ENCODE measurements at regions of chr7 and their contacts with region 1.

Region 1: GRCh38 chr7:147276783-147277370 is 1160.3 kb downstream of the CNTNAP2 start:
- DNase-seq: no peak
- H3K4me3 Mint-ChIP-seq: no peak overlapping the region
- H3K27ac Mint-ChIP-seq: no peak overlapping the region
- H3K4me1 Mint-ChIP-seq: no peaks in the 10 kb centered on the region
- H3K27me3 Mint-ChIP-seq: no peaks in the 10 kb centered on the region

Region 2: GRCh38 chr7:147151661-147152060 is 125.2 kb before region 1 on chr7:
- intact Hi-C with region 1: no loop called
- DNase-seq: no peak
- H3K4me3 Mint-ChIP-seq: no peak overlapping the region
- H3K27ac Mint-ChIP-seq: no peak overlapping the region
- H3K4me1 Mint-ChIP-seq: no peaks in the 10 kb centered on the region
- H3K27me3 Mint-ChIP-seq: no peaks in the 10 kb centered on the region

Region 3: DNA sequence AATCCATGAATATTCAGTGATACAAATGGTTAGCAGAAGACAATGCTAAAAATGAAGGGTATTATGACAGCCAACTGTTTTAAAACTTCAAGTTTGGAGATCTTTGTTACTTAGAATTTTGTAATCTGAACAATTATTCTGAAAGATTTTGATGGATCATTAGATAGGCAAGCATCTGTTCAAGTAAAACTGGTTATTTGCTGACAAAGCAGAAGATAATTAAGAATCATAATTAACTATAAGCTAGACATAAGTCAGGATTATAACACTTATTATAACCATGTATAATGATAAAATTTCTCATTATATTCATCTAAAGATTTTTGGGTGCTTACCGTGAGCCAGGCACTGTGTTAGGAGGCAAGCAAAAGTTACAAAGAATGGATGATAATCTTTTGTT is 15.2 kb before region 1 on chr7:
- intact Hi-C with region 1: loop called (anchors 1 kb)
- DNase-seq: no peak
- H3K4me3 Mint-ChIP-seq: no peak overlapping the region
- H3K27ac Mint-ChIP-seq: no peak overlapping the region
- H3K4me1 Mint-ChIP-seq: no peaks in the 10 kb centered on the region
- H3K27me3 Mint-ChIP-seq: no peaks in the 10 kb centered on the region

Region 4: DNA sequence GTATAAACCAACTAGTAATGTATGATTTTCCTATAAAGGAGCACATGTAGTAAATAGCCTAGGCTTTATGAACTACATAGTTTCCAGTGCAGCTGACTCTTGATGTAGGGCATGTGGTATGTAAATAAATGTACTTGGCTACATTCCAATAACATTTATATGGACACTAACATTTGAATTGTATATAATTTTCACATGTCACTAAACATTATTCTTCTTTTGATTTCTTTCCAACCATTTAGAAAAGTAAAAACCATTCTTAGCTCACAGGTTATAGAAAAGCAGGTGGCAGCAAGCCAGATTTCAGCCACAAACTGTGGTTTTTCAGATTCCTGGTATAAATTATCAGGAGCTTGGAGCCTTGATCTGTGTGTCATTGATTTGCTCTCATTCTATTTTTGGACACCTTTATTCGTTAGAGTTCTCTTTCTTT is 21.8 kb after region 1 on chr7:
- intact Hi-C with region 1: no loop called
- DNase-seq: no peak
- H3K4me3 Mint-ChIP-seq: no peak overlapping the region
- H3K27ac Mint-ChIP-seq: no peak overlapping the region
- H3K4me1 Mint-ChIP-seq: no peaks in the 10 kb centered on the region
- H3K27me3 Mint-ChIP-seq: no peaks in the 10 kb centered on the region